ENCODE measurements at regions of chr11 and their contacts with region 1.

Region 1: DNA sequence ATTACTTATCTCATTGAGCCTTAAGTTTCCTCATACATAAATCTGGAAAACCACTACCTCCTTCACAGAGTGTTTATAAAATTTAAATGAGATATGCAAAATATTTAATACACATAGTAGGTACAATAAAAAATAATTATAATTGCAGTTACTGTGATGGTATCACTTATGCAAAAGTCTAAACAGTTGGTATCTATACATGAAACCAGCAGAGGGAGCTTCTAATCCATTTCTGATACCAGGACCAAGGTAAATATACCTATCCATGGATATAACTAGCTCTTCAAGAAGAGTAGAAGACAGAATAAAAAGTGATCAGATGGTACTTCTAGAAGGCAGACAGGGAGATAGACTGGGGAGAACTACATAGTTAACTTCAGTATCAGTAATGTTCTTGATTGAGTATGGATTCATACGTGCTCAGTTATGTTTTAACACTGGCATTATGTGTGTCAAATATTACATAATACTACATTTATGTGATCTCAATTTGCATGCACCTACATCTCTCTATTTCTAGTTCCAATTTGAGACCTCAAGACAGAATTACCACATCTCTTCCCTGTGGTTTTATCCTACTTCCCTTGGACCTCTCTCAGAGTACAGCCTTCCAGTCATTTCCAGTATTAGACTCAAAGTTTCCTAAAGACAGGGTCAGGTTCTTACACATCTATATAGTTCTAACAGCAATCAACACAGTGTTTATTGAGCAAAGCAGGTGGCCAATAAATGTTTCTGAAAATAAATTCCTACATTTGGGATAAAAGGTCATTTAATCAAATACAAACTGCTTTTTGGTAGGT is 13.7 kb upstream of the TSG101 start:
- DNase-seq: no peak
- H3K4me3 Mint-ChIP-seq: no peak overlapping the region
- H3K27ac Mint-ChIP-seq: no peak overlapping the region
- H3K4me1 Mint-ChIP-seq: peaks cover 6% of the 10 kb centered on the region
- H3K27me3 Mint-ChIP-seq: no peaks in the 10 kb centered on the region

Region 2: DNA sequence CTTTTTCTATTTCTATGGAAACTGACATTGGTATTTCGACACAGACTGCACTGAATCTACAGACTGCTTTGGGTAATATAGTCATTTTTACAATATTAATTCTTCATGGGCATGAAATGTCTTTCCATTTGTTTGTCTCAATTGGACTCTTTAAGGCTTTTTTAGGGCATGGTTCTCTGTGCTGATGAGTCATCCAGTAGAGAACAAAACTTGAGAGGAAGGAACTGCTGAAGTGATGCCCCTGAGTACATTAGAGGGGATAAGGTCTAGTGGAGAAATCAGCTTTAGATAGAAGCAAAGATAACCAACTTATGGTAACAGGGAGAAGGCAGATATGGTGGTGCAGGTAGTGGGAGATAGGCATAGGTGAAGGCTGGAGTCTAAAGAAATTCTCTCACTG is 38.8 kb before region 1 on chr11:
- CTCF ChIA-PET with region 1: no interaction called
- intact Hi-C with region 1: no loop called
- DNase-seq: no peak
- H3K4me3 Mint-ChIP-seq: no peak overlapping the region
- H3K27ac Mint-ChIP-seq: no peak overlapping the region
- H3K4me1 Mint-ChIP-seq: no peaks in the 10 kb centered on the region
- H3K27me3 Mint-ChIP-seq: no peaks in the 10 kb centered on the region

Region 3: GRCh38 chr11:18650859-18651557 is 110.6 kb after region 1 on chr11:
- CTCF ChIA-PET with region 1: interaction called, 32 read pairs
- intact Hi-C with region 1: loop called (anchors 1 kb)
- DNase-seq: peak; percentile 65
- H3K4me3 Mint-ChIP-seq: no peak overlapping the region
- H3K27ac Mint-ChIP-seq: no peak overlapping the region
- H3K4me1 Mint-ChIP-seq: no peaks in the 10 kb centered on the region
- H3K27me3 Mint-ChIP-seq: no peaks in the 10 kb centered on the region

Region 4: DNA sequence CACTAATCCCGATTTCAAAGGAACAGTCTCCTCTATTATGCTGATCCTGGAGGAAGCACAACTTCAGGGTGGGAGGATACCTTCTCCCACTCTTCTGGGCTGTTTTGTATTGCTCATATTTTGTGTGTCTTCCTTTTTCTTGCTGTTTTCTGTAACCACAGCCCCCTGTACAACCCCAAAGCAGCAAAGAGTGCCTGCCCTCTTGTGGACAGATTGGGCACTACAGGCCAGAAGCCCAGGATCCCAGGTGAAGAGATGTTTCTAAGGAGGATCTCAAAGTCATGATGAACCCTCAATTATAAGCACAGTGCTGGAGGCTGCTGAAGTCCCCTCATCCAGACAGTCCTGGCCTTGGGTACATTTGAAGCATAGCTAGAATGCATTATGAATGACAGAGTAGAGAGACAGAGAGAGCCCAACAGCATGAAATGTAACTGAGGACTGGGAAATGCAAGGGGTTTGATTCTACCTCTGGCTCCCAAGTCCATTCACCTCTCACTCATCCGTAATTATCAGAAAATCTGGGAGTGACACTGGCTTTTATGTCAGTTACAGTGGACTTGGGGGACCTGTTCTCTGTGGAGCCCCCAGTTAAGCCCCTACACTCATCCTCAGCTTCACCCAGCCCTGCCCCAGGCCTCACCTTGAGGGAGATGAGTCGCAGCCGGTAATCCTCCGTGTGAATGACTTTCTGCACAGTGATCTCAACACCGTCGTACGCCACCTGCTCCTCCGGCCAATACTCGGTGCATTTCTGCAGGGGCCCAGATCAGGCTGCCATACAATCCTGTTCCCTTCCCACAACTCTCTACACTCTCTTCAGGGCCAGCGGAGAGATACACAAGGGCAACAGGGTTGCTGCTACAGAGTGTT is 191.8 kb after region 1 on chr11:
- CTCF ChIA-PET with region 1: interaction called, 27 read pairs
- intact Hi-C with region 1: loop called (anchors 1 kb)
- DNase-seq: peak; percentile 79
- H3K4me3 Mint-ChIP-seq: no peak overlapping the region
- H3K27ac Mint-ChIP-seq: no peak overlapping the region
- H3K4me1 Mint-ChIP-seq: peaks cover 3% of the 10 kb centered on the region
- H3K27me3 Mint-ChIP-seq: no peaks in the 10 kb centered on the region